ENCODE measurements at regions of chr14 and their contacts with region 1.

Region 1: DNA sequence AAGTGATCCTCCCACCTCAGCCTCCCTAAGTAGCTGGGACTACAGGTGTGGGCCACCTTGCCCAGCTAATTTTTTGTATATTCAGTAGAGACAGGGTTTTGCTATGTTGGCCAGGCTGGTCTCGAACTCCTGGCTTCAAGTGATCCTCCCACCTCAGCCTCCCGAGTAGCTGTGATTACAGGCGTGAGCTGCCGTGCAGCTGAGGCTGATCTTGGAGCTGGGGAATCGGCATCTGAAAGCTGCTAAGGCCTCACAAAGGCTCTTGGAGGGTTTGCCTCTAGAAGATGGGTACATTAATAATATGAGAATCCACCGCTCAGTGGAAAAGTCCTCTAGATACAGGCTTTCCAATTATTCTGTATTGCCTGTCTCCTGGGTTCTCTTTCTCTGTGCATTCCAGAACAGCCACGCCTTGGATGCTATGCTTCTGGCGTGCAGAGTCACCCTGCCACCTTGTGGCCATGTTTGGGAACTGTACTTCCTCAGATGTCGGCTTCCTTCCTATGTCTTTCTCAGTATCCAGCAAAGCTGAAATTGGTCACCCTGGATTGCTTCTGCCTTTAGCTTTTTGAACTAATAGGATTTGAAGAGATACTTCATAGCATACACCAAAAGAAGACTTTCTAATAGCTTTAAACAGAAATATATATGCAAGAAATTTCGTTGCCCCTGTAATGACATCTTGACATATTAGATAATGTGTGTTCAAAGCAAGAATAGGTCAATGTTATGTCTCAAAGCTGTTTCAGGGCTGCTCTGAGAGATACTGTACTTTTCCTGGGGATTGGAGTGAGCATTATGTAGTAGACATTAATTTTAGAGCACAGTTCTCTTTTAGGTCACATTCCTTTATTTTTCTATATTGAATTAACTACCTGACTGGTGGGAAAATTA is 75.4 kb downstream of the SNAPC1 start:
- DNase-seq: peak; percentile 64
- H3K27ac ChIP-seq: no peak overlapping the region
- CTCF ChIP-seq: peak; percentile 93

Region 2: GRCh38 chr14:61461808-61462275 is 375.7 kb before region 1 on chr14:
- CTCF ChIA-PET with region 1: interaction called, 20 read pairs
- POLR2A ChIA-PET with region 1: no interaction called
- DNase-seq: peak; percentile 63
- H3K27ac ChIP-seq: peak overlapping the region; percentile 62
- CTCF ChIP-seq: peak; percentile 71

Region 3: DNA sequence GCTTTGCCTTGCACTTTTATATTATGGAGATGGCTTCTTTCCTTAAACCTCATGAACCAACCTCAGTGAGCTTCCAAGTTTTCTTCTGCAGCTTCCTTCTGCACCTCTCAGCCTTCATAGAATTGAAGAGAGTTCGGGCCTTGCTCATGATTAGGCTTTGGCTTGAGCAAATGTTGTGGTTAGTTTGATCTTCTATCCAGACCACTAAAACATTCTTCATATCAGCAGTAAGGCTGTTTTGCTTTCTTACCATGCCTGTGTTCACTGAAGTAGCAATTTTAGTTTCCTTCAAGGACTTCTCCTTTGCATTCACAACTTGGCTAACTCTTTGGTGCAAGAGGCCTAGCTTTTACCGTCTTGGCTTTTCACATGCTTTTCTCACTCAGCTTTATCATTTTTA is 50.0 kb after region 1 on chr14:
- CTCF ChIA-PET with region 1: no interaction called
- POLR2A ChIA-PET with region 1: no interaction called
- DNase-seq: no peak
- H3K27ac ChIP-seq: no peak overlapping the region
- CTCF ChIP-seq: no peak